ENCODE measurements at regions of chr13 and their contacts with region 1.

Region 1: DNA sequence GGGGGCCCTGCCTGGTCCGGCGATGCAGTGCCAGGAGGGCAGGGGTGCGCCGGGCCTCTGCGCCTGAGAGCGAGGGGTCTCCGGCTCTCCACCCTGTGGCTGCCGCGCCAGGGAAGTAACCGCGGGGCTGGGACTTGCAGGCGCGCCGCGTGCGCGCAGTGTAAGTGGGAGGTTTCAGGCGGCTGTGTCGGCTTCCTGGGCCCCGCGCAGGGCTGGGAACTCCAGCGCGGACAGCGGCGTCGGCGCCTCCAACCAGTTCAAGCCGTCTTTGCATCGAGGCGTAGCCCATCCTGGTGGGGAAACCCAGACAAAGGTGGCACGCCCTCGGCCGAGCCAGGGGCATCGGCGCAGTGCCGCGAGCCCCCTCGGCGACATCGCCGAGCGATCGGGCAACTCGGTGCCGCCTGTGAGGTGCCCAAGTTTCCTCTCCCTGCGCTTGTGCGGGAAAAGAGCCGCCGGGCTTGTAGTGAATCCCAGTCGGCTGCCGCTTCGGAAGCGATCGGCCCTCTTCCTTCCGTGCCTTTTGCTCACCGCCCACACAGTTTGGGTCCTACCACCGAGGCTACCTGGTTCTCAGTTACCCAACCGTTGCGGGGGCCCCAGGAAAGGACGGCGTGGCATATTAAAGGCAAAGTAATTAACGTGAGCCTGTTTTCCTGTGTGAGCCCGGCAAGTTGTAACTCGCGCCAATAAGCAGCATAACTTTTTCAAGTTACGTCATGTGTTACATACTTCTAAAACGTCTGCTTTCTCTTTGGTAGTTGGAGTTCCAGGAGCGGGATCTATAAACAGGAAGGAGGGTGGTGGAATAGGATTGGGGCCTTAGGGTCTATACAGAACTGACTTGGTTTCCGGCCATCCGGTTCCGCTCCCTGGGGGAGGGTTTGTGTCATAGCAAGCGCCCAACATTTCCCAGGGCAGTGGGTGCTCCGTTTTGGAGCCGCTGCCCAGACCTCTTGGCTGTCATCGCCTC is 1.2 kb downstream of the LRCH1 start:
- DNase-seq: peak; percentile 77
- H3K4me3 ChIP-seq: peak overlapping the region; percentile 86
- H3K27ac ChIP-seq: peak overlapping the region; percentile 87
- H3K4me1 ChIP-seq: peaks cover 8% of the 10 kb centered on the region
- H3K27me3 ChIP-seq: no peaks in the 10 kb centered on the region
- CTCF ChIP-seq: no peak

Region 2: DNA sequence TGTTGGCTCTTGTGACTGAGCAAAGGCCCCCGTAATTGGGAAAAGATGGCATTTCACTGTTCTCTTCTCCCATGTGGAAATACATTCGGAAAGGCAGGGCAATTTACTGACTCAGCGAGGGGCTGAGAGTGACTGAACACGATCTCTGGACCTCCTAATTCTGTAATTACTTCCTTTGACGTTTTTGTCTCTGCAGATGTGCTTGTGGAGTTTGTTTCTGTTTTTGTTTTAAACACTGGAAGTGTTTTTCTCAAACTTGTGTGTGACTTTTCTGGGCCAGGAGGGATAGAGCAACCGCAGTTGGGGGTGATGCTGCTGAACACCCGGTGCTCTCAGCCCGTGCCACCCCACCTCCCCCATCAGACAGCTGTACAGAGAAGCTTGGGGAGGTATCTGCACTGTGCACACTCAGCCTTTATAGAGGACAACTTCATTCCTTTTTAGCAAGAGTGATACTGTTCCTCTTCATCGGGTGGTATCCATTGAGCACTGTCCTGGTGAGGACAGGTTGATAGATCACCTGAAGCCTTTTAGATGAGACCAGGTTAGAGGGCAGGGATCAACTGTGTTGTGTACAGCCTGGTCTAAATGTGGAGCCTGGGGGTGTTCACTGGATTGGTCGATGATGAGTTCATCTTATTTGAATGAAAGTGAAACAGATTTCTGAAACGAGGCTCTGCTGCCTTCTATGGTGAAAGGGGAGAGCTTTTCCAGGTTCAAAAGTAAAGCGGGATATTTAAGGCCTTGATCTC is 125.4 kb after region 1 on chr13:
- intact Hi-C with region 1: loop called (anchors 10 kb)
- DNase-seq: no peak
- H3K4me3 ChIP-seq: no peak overlapping the region
- H3K27ac ChIP-seq: peak overlapping the region; percentile 56
- H3K4me1 ChIP-seq: no peaks in the 10 kb centered on the region
- H3K27me3 ChIP-seq: no peaks in the 10 kb centered on the region
- CTCF ChIP-seq: no peak

Region 3: GRCh38 chr13:46721054-46721453 is 166.9 kb after region 1 on chr13:
- intact Hi-C with region 1: loop called (anchors 2 kb)
- DNase-seq: peak; percentile 48
- H3K4me3 ChIP-seq: no peak overlapping the region
- H3K27ac ChIP-seq: no peak overlapping the region
- H3K4me1 ChIP-seq: no peaks in the 10 kb centered on the region
- H3K27me3 ChIP-seq: no peaks in the 10 kb centered on the region
- CTCF ChIP-seq: peak; percentile 40

Measured in colonic mucosa (tissue), 4 donors.